ENCODE measurements at regions of chr7 and their contacts with region 1.

Region 1: GRCh38 chr7:14457568-14458453 is 444.7 kb downstream of the DGKB start:
- DNase-seq: peak; percentile 84
- H3K4me3 Mint-ChIP-seq: peak overlapping the region; percentile 39
- H3K27ac Mint-ChIP-seq: no peak overlapping the region
- H3K4me1 Mint-ChIP-seq: no peaks in the 10 kb centered on the region
- H3K27me3 Mint-ChIP-seq: no peaks in the 10 kb centered on the region
- CTCF ChIP-seq: peak; percentile 91

Region 2: GRCh38 chr7:13524076-13524475 is 933.7 kb before region 1 on chr7:
- CTCF ChIA-PET with region 1: no interaction called
- intact Hi-C with region 1: loop called (anchors 1 kb)
- DNase-seq: no peak
- H3K4me3 Mint-ChIP-seq: no peak overlapping the region
- H3K27ac Mint-ChIP-seq: no peak overlapping the region
- H3K4me1 Mint-ChIP-seq: no peaks in the 10 kb centered on the region
- H3K27me3 Mint-ChIP-seq: no peaks in the 10 kb centered on the region
- CTCF ChIP-seq: no peak

Region 3: DNA sequence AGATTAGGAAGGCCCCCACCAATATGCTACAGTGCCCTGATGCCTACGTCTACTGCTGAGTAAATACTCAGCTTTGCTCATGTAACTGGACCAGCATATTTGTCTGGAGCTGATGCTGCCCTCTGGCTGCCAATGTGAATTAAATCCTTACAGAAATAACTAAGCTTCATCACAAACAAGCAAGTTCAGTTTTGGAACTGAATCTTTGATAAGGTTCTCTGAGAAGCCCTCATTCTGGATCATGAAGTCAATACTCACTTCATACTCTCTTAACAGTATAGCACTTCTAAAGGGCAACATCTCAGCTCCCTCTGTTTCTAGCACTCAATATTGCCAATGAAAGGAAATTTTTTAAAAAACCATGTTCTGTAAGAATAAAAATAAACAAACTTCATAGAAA is 715.0 kb before region 1 on chr7:
- CTCF ChIA-PET with region 1: no interaction called
- intact Hi-C with region 1: loop called (anchors 10 kb)
- DNase-seq: peak; percentile 41
- H3K4me3 Mint-ChIP-seq: no peak overlapping the region
- H3K27ac Mint-ChIP-seq: no peak overlapping the region
- H3K4me1 Mint-ChIP-seq: peaks cover 10% of the 10 kb centered on the region
- H3K27me3 Mint-ChIP-seq: no peaks in the 10 kb centered on the region
- CTCF ChIP-seq: peak; percentile 46

Region 4: GRCh38 chr7:13860734-13861133 is 597.1 kb before region 1 on chr7:
- CTCF ChIA-PET with region 1: no interaction called
- intact Hi-C with region 1: loop called (anchors 1 kb)
- DNase-seq: no peak
- H3K4me3 Mint-ChIP-seq: no peak overlapping the region
- H3K27ac Mint-ChIP-seq: peak overlapping the region; percentile 10
- H3K4me1 Mint-ChIP-seq: peaks cover 12% of the 10 kb centered on the region
- H3K27me3 Mint-ChIP-seq: no peaks in the 10 kb centered on the region
- CTCF ChIP-seq: no peak

Region 5: DNA sequence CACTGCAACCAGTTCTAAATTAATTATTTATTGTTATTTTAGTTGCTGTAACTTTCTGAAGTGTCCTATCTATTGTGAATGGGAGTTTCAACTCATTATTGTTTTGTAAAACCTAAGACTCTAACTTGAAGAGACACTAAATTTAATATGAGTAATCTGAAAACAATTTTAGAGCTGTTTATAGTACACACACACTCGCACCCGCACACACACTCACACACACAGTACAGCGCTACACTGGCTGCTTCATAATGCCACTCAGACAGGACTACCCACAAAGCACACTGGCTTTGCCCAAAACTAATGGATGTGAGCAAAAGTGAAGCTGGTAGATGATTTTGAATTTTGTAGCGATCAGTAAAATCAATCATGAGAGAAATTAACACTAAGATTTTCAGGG is 229.5 kb before region 1 on chr7:
- CTCF ChIA-PET with region 1: no interaction called
- intact Hi-C with region 1: no loop called
- DNase-seq: no peak
- H3K4me3 Mint-ChIP-seq: no peak overlapping the region
- H3K27ac Mint-ChIP-seq: no peak overlapping the region
- H3K4me1 Mint-ChIP-seq: peaks cover 9% of the 10 kb centered on the region
- H3K27me3 Mint-ChIP-seq: no peaks in the 10 kb centered on the region
- CTCF ChIP-seq: no peak

Measured in Calu3 (cell line).